ENCODE measurements at regions of chr1 and their contacts with region 1.

Region 1: DNA sequence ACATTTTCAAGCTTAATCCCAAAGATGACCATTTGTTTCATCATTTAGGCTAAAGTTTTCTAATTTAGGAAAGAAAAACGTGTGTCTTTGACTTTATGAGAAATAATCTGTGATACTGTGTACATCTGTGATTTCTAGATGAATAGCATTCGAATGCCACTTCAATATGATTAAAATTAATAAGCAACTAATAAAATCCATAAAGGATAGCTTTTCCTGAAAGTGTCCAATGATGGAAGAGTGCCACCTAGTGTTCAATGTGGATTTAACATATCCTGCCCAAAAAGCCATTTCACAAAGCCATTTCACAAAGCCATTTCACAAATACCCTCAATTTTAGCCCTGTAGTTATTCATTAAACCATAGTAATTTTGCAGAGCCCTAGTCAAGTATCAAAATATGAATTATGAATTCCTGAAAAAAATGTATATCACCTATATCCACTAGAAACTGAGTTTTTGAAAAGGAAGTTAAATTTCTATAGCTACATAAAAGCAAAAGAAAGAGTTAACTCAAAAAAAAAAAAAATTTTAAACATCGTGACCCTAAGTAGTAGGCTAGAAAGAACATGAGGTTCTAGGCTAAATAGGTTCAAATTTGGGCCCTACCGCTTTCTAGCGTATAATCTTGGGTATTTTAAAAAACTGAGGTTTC is 19.1 kb downstream of the NME7 start:
- DNase-seq: peak; percentile 19
- ATAC-seq: peak; percentile 61
- H3K4me3 ChIP-seq: no peak overlapping the region
- H3K27ac ChIP-seq: no peak overlapping the region
- H3K4me1 ChIP-seq: no peaks in the 10 kb centered on the region
- H3K27me3 ChIP-seq: no peaks in the 10 kb centered on the region
- CTCF ChIP-seq: peak; percentile 57 to 78 (median 62)
- EP300 ChIP-seq: no peak
- POLR2A ChIP-seq: no peak
- RAD21 ChIP-seq: peak; percentile 92

Region 2: DNA sequence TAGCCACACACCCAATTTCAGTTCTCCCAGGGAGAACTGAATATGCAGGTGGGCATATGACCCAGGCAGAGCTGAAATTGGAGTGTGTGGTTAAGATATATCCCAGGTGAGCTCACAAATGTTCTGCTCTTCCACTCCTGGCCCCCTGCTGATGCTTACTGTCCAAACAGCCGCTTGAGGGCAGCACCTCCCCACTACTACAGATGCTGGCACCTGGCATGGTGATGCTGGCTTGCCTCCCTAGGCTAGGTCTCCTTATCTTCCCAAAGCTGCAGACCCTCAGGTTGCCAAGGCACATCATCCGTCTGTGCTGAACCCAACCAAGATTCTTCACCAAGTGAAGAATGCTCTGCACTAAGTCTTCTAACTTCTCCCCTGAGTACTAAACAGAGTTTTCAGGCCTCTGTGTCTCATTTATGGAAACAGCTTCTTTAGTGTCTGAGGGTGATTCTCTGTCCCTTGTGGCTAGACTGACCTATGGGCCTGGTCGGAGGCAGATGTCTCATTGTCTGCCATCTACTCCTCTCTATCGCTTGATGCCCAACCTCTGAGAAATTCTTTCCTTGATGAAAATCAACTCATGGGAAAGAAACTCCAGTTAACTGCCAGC is 744.9 kb before region 1 on chr1:
- CTCF ChIA-PET with region 1: interaction called, 240 read pairs
- POLR2A ChIA-PET with region 1: interaction called, 3 read pairs
- RAD21 ChIA-PET with region 1: interaction called, 135 read pairs
- SMC1A ChIA-PET with region 1: interaction called, 172 read pairs
- in situ Hi-C with region 1: loop called (anchors 5 kb)
- intact Hi-C with region 1: loop called (anchors 1 kb)
- DNase-seq: peak; percentile 7
- ATAC-seq: peak; percentile 99
- H3K4me3 ChIP-seq: no peak overlapping the region
- H3K27ac ChIP-seq: no peak overlapping the region
- H3K4me1 ChIP-seq: no peaks in the 10 kb centered on the region
- H3K27me3 ChIP-seq: no peaks in the 10 kb centered on the region; a peak in 1 of 4 replicates
- CTCF ChIP-seq: peak; percentile 76 to 92 (median 80)
- EP300 ChIP-seq: no peak
- POLR2A ChIP-seq: no peak
- RAD21 ChIP-seq: peak; percentile 97

Region 3: GRCh38 chr1:168626326-168626725 is 722.2 kb before region 1 on chr1:
- CTCF ChIA-PET with region 1: interaction called, 10 read pairs
- POLR2A ChIA-PET with region 1: no interaction called
- RAD21 ChIA-PET with region 1: no interaction called
- SMC1A ChIA-PET with region 1: interaction called, 4 read pairs
- in situ Hi-C with region 1: no loop called
- intact Hi-C with region 1: no loop called
- DNase-seq: no peak
- ATAC-seq: no peak
- H3K4me3 ChIP-seq: no peak overlapping the region
- H3K27ac ChIP-seq: no peak overlapping the region
- H3K4me1 ChIP-seq: no peaks in the 10 kb centered on the region
- H3K27me3 ChIP-seq: no peaks in the 10 kb centered on the region
- CTCF ChIP-seq: no peak
- EP300 ChIP-seq: no peak
- POLR2A ChIP-seq: no peak
- RAD21 ChIP-seq: no peak

Region 4: GRCh38 chr1:168801032-168801745 is 547.3 kb before region 1 on chr1:
- CTCF ChIA-PET with region 1: no interaction called
- POLR2A ChIA-PET with region 1: no interaction called
- RAD21 ChIA-PET with region 1: no interaction called
- SMC1A ChIA-PET with region 1: no interaction called
- in situ Hi-C with region 1: no loop called
- intact Hi-C with region 1: no loop called
- DNase-seq: no peak
- ATAC-seq: no peak
- H3K4me3 ChIP-seq: no peak overlapping the region
- H3K27ac ChIP-seq: no peak overlapping the region
- H3K4me1 ChIP-seq: no peaks in the 10 kb centered on the region
- H3K27me3 ChIP-seq: peaks cover 0 to 2% of the 10 kb centered on the region in 2 experiments; a peak in 1 of 4 replicates
- CTCF ChIP-seq: no peak
- EP300 ChIP-seq: no peak
- POLR2A ChIP-seq: no peak
- RAD21 ChIP-seq: no peak

Region 5: GRCh38 chr1:169106095-169106920 is 242.2 kb before region 1 on chr1 and contains the start of gene ATP1B1:
- CTCF ChIA-PET with region 1: interaction called, 61 read pairs
- POLR2A ChIA-PET with region 1: no interaction called
- RAD21 ChIA-PET with region 1: interaction called, 35 read pairs
- SMC1A ChIA-PET with region 1: interaction called, 53 read pairs
- in situ Hi-C with region 1: no loop called
- intact Hi-C with region 1: no loop called
- DNase-seq: no peak
- ATAC-seq: peak; percentile 94
- H3K4me3 ChIP-seq: peak within 1 kb of the TSS; percentile 86
- H3K27ac ChIP-seq: no peak within 1 kb of the TSS
- H3K4me1 ChIP-seq: peaks cover 3% of the 10 kb centered on the region; the same call in 1 of the 2 replicates
- H3K27me3 ChIP-seq: peaks cover 2 to 6% of the 10 kb centered on the region in 2 experiments; a peak in 2 of 4 replicates
- CTCF ChIP-seq: peak in 2 of 3 experiments; percentile 21 to 36; a peak in 3 of 6 replicates
- EP300 ChIP-seq: no peak
- POLR2A ChIP-seq: peak; percentile 84
- RAD21 ChIP-seq: no peak
- polyA plus RNA-seq, gene ATP1B1: 0.84 to 0.90 TPM

Region 6: DNA sequence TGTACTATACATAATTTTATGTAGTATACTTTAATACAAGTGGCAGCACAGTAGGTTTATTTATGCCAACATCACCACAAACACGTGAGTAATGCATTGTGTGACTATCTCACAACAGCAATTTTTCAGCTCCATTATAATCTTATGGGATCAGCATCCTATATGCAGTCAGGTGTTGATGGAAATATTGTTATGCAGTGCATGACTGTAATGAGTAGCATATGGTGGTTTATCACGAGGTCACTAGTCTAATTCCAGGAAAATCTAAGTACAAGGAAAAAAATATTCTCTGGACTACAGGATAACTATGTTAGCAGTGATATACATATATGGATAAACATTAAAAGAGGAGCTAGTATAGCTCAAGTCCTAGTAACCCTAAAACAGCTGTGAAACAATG is 173.0 kb before region 1 on chr1:
- CTCF ChIA-PET with region 1: interaction called, 29 read pairs
- POLR2A ChIA-PET with region 1: no interaction called
- RAD21 ChIA-PET with region 1: interaction called, 3 read pairs
- SMC1A ChIA-PET with region 1: interaction called, 7 read pairs
- in situ Hi-C with region 1: no loop called
- intact Hi-C with region 1: no loop called
- DNase-seq: no peak
- ATAC-seq: no peak
- H3K4me3 ChIP-seq: no peak overlapping the region
- H3K27ac ChIP-seq: no peak overlapping the region
- H3K4me1 ChIP-seq: no peaks in the 10 kb centered on the region
- H3K27me3 ChIP-seq: no peaks in the 10 kb centered on the region
- CTCF ChIP-seq: no peak
- EP300 ChIP-seq: no peak
- POLR2A ChIP-seq: no peak
- RAD21 ChIP-seq: no peak

Region 7: GRCh38 chr1:169361281-169361680 is 12.8 kb after region 1 on chr1:
- CTCF ChIA-PET with region 1: interaction called, 37 read pairs
- POLR2A ChIA-PET with region 1: no interaction called
- RAD21 ChIA-PET with region 1: interaction called, 7 read pairs
- SMC1A ChIA-PET with region 1: interaction called, 16 read pairs
- in situ Hi-C with region 1: no loop called
- intact Hi-C with region 1: no loop called
- DNase-seq: no peak
- ATAC-seq: no peak
- H3K4me3 ChIP-seq: no peak overlapping the region
- H3K27ac ChIP-seq: no peak overlapping the region
- H3K4me1 ChIP-seq: peaks cover 4% of the 10 kb centered on the region; the same call in 1 of the 2 replicates
- H3K27me3 ChIP-seq: no peaks in the 10 kb centered on the region
- CTCF ChIP-seq: no peak
- EP300 ChIP-seq: no peak
- POLR2A ChIP-seq: no peak
- RAD21 ChIP-seq: no peak

Region 8: GRCh38 chr1:169584483-169585144 is 236.1 kb after region 1 on chr1:
- CTCF ChIA-PET with region 1: no interaction called
- POLR2A ChIA-PET with region 1: no interaction called
- RAD21 ChIA-PET with region 1: no interaction called
- SMC1A ChIA-PET with region 1: no interaction called
- in situ Hi-C with region 1: no loop called
- intact Hi-C with region 1: no loop called
- DNase-seq: no peak
- ATAC-seq: peak; percentile 10; the same call in 2 of the 3 replicates
- H3K4me3 ChIP-seq: no peak overlapping the region
- H3K27ac ChIP-seq: no peak overlapping the region
- H3K4me1 ChIP-seq: peaks cover 5% of the 10 kb centered on the region; the same call in 1 of the 2 replicates
- H3K27me3 ChIP-seq: no peaks in the 10 kb centered on the region; a peak in 1 of 4 replicates
- CTCF ChIP-seq: no peak
- EP300 ChIP-seq: no peak
- POLR2A ChIP-seq: no peak
- RAD21 ChIP-seq: no peak

Measured in GM12878 (cell line).